Tibial artery (tissue), 4 donors: ENCODE measurements at regions of chr5 and their contacts with region 1.

Region 1: GRCh38 chr5:15499528-15500324 is at the start of gene FBXL7:
- DNase-seq: peak; percentile 79 to 90
- H3K4me3 ChIP-seq: peak within 1 kb of the TSS; percentile 76 to 92
- H3K27ac ChIP-seq: peak within 1 kb of the TSS; percentile 84 to 87
- H3K4me1 ChIP-seq: peaks cover 0 to 19% (median 14%) of the 10 kb centered on the region in 4 donors
- H3K27me3 ChIP-seq: no peaks in the 10 kb centered on the region
- CTCF ChIP-seq: peak; percentile 19 to 30

Region 2: GRCh38 chr5:15794052-15794985 is 294.6 kb after region 1 on chr5:
- intact Hi-C with region 1: loop called (anchors 5 kb)
- DNase-seq: no peak
- H3K4me3 ChIP-seq: no peak overlapping the region
- H3K27ac ChIP-seq: no peak overlapping the region
- H3K4me1 ChIP-seq: peaks cover 0 to 31% (median 6%) of the 10 kb centered on the region in 4 donors
- H3K27me3 ChIP-seq: no peaks in the 10 kb centered on the region
- CTCF ChIP-seq: peak; percentile 31 to 46